ENCODE measurements at regions of chr2 and their contacts with region 1.

Region 1: GRCh38 chr2:135004005-135004746 is 43.1 kb downstream of the MAP3K19 start:
- DNase-seq: peak; percentile 63 to 64
- ATAC-seq: peak; percentile 98 to 100
- H3K4me3 ChIP-seq: no peak overlapping the region
- H3K27ac ChIP-seq: no peak overlapping the region
- H3K4me1 ChIP-seq: no peaks in the 10 kb centered on the region; the same call in 2 of the 3 replicates
- CTCF ChIP-seq: peak; percentile 92
- EP300 ChIP-seq: no peak
- POLR2A ChIP-seq: no peak
- RAD21 ChIP-seq: peak; percentile 96 to 98

Region 2: DNA sequence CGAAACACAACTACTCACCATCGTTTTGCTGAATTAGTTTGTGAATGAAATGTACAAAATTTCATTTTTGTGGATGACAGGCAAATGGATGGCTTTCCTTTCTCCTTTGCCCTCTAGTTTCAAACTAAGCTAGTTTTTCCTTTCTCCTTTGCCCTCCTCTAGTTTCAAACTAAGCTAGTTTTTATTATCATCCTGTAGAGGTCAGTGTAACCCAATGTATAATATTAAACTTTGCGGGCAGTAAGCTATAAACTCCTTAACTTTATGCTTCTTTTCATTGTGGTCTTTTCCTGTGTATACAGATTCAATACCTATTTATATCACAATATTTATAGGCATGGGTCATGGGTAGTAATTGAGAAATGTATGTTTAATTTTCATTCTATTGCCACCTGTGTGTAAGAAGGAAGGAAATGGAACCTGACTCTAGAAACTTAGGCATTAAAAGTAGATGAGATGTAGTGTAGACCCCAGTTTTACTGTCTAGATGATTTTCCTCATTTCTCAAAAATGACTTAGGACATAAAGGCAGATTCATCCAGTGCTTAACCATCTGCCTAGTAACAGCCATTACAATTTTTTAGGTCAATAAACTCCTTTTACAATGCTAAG is 15.1 kb before region 1 on chr2:
- CTCF ChIA-PET with region 1: interaction called, 29 read pairs
- POLR2A ChIA-PET with region 1: no interaction called
- DNase-seq: peak; percentile 18 to 40
- ATAC-seq: peak; percentile 80 to 90
- H3K4me3 ChIP-seq: no peak overlapping the region
- H3K27ac ChIP-seq: no peak overlapping the region
- H3K4me1 ChIP-seq: no peaks in the 10 kb centered on the region
- CTCF ChIP-seq: peak; percentile 70
- EP300 ChIP-seq: no peak
- POLR2A ChIP-seq: no peak
- RAD21 ChIP-seq: peak; percentile 67 to 70

Region 3: GRCh38 chr2:135023886-135024485 is 19.8 kb after region 1 on chr2:
- CTCF ChIA-PET with region 1: interaction called, 17 read pairs
- POLR2A ChIA-PET with region 1: no interaction called
- DNase-seq: no peak
- ATAC-seq: no peak
- H3K4me3 ChIP-seq: no peak overlapping the region
- H3K27ac ChIP-seq: no peak overlapping the region
- H3K4me1 ChIP-seq: no peaks in the 10 kb centered on the region
- CTCF ChIP-seq: no peak
- EP300 ChIP-seq: no peak
- POLR2A ChIP-seq: no peak
- RAD21 ChIP-seq: no peak

Region 4: DNA sequence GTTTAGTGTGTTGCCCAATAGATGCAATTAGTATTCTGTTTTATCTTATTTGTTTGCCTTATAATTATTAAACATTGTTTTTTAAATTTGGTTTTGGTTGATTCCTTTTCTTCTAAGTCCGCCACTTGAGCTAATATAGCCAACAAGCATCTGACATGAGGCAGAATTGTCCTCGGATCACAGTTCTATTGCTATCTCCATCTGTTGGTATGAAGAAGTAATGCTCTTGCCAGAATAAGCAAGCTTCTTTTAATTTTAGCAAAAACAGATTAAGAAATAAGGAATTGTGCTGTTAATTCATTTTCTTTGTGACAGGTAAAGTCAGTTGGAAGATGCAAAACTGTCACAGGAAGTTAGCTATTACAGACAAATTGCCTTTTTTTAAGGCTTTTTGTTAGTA is 581.4 kb after region 1 on chr2:
- CTCF ChIA-PET with region 1: interaction called, 16 read pairs
- POLR2A ChIA-PET with region 1: no interaction called
- DNase-seq: peak in 1 of 2 experiments; percentile 18
- ATAC-seq: no peak
- H3K4me3 ChIP-seq: no peak overlapping the region
- H3K27ac ChIP-seq: no peak overlapping the region
- H3K4me1 ChIP-seq: no peaks in the 10 kb centered on the region
- CTCF ChIP-seq: no peak; the same call in 2 of the 3 replicates
- EP300 ChIP-seq: no peak
- POLR2A ChIP-seq: no peak
- RAD21 ChIP-seq: no peak

Region 5: GRCh38 chr2:135600915-135601314 is 596.7 kb after region 1 on chr2:
- CTCF ChIA-PET with region 1: interaction called, 29 read pairs
- POLR2A ChIA-PET with region 1: no interaction called
- DNase-seq: peak in 1 of 2 experiments; percentile 12
- ATAC-seq: no peak
- H3K4me3 ChIP-seq: no peak overlapping the region
- H3K27ac ChIP-seq: no peak overlapping the region
- H3K4me1 ChIP-seq: no peaks in the 10 kb centered on the region
- CTCF ChIP-seq: peak; percentile 30; the same call in 2 of the 3 replicates
- EP300 ChIP-seq: no peak
- POLR2A ChIP-seq: no peak
- RAD21 ChIP-seq: peak; percentile 43 to 48; a peak in 4 of 5 replicates

Region 6: GRCh38 chr2:135701442-135701841 is 697.3 kb after region 1 on chr2:
- CTCF ChIA-PET with region 1: interaction called, 16 read pairs
- POLR2A ChIA-PET with region 1: no interaction called
- DNase-seq: no peak
- ATAC-seq: peak in 1 of 2 experiments; percentile 47; a peak in 3 of 6 replicates
- H3K4me3 ChIP-seq: no peak overlapping the region
- H3K27ac ChIP-seq: no peak overlapping the region
- H3K4me1 ChIP-seq: no peaks in the 10 kb centered on the region
- CTCF ChIP-seq: no peak
- EP300 ChIP-seq: no peak
- POLR2A ChIP-seq: no peak
- RAD21 ChIP-seq: no peak

Measured in A549 (cell line).